ENCODE measurements at regions of chr13 and their contacts with region 1.

Region 1: DNA sequence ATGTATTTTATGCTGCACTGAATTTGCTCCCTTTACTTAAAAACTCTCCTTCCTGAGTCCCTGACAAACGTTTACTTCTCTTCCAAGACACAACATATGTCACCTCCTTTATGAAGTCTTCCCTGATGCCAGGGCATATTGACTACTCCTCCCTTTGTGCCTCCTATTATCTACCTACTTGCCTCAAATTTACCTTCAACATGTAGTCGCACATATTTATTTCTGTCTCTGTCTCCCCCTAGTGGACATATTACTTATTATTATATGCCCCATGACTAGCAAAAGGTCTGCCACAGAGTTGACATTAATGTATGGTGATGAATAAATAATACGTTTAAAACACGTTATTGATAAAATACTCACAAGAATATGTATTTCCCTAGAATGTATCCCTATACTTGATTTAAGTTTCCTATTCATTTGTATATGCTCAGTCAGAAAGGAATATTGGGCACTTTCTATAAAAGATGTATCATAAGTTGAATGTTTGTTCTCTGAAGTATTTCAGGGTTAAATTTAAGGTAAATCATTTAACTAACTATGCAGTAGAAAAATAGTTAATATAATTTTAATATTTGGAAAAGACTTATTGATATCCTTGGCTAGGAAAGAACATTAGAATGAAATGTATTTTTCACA is 250.3 kb upstream of the ATXN8OS start:
- DNase-seq: peak; percentile 45
- ATAC-seq: peak; percentile 87
- H3K4me3 ChIP-seq: no peak overlapping the region
- H3K27ac ChIP-seq: no peak overlapping the region
- H3K4me1 ChIP-seq: no peaks in the 10 kb centered on the region
- H3K27me3 ChIP-seq: no peaks in the 10 kb centered on the region
- CTCF ChIP-seq: peak; percentile 30 to 81 (median 44); a peak in 4 of 6 replicates
- POLR2A ChIP-seq: no peak
- RAD21 ChIP-seq: peak; percentile 64

Region 2: GRCh38 chr13:69579351-69579750 is 278.0 kb before region 1 on chr13:
- CTCF ChIA-PET with region 1: no interaction called
- POLR2A ChIA-PET with region 1: no interaction called
- RAD21 ChIA-PET with region 1: no interaction called
- intact Hi-C with region 1: loop called (anchors 10 kb)
- DNase-seq: no peak
- ATAC-seq: no peak
- H3K4me3 ChIP-seq: no peak overlapping the region
- H3K27ac ChIP-seq: no peak overlapping the region
- H3K4me1 ChIP-seq: no peaks in the 10 kb centered on the region
- H3K27me3 ChIP-seq: no peaks in the 10 kb centered on the region
- CTCF ChIP-seq: peak in 1 of 3 experiments; percentile 24; a peak in 2 of 6 replicates
- POLR2A ChIP-seq: no peak
- RAD21 ChIP-seq: peak; percentile 31; the same call in 1 of the 2 replicates

Region 3: GRCh38 chr13:69676286-69676685 is 181.0 kb before region 1 on chr13:
- CTCF ChIA-PET with region 1: no interaction called
- POLR2A ChIA-PET with region 1: no interaction called
- RAD21 ChIA-PET with region 1: no interaction called
- intact Hi-C with region 1: no loop called
- DNase-seq: no peak
- ATAC-seq: no peak
- H3K4me3 ChIP-seq: no peak overlapping the region
- H3K27ac ChIP-seq: no peak overlapping the region
- H3K4me1 ChIP-seq: no peaks in the 10 kb centered on the region
- H3K27me3 ChIP-seq: no peaks in the 10 kb centered on the region
- CTCF ChIP-seq: no peak
- POLR2A ChIP-seq: no peak
- RAD21 ChIP-seq: no peak

Measured in HCT116 (cell line).